IMR-90 (cell line): ENCODE measurements at regions of chr9 and their contacts with region 1.

Region 1: GRCh38 chr9:75666861-75667554 is 223.5 kb upstream of the PCSK5 start:
- DNase-seq: no peak
- ATAC-seq: no peak
- H3K4me3 ChIP-seq: no peak overlapping the region
- H3K27ac ChIP-seq: no peak overlapping the region
- H3K4me1 ChIP-seq: no peaks in the 10 kb centered on the region
- H3K27me3 ChIP-seq: no peaks in the 10 kb centered on the region
- CTCF ChIP-seq: no peak
- POLR2A ChIP-seq: no peak
- RAD21 ChIP-seq: no peak

Region 2: DNA sequence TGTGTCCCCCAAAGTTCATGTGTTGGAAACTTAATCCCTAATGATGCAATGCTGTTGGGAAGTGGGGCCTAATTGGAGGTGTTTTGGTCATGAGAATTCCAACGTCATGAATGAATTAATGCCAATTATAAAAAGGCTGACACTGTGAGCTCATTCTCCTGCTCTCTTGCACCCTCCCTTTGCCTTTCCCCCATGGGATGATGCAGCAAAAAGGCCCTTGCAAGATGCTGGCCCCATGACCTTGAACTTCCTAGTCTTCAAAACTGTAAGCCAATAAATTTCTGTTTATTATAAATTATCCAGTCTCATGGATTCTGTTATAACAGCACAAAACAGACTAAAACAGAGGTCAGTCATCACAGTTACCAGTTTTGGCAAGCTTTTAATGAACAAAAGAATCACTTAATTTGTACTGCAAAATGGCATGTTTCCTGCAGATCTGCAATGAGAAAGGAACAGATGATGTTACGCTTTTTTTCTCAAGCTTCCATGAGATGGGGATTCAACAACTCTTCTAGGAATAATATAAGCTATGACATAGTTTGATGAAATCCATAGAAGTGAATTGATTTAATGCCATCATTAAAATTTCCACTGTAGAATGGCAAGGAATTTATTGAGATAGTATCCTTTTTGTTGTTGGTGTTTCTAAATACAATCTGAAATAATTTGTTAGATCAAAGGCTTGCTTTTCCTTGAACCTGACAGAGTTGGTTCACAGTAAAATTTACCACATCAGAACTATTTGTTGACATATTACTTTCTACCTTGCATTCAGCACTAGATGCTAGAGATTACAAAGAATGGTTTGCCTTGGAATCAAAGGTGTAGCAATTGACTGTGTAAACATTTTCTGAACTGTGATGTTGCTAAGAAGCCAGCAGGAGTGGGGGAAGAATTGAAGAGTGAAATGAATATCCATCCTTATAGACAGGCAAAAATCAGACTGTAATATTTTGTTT is 756.5 kb after region 1 on chr9:
- CTCF ChIA-PET with region 1: no interaction called
- POLR2A ChIA-PET with region 1: interaction called, 26 read pairs
- dilution Hi-C with region 1: no loop called
- in situ Hi-C with region 1: no loop called
- intact Hi-C with region 1: no loop called
- DNase-seq: no peak
- ATAC-seq: no peak
- H3K4me3 ChIP-seq: no peak overlapping the region
- H3K27ac ChIP-seq: no peak overlapping the region
- H3K4me1 ChIP-seq: no peaks in the 10 kb centered on the region
- H3K27me3 ChIP-seq: no peaks in the 10 kb centered on the region
- CTCF ChIP-seq: no peak
- POLR2A ChIP-seq: no peak
- RAD21 ChIP-seq: no peak